Right ventricle myocardium inferior (tissue), 1 donor: ENCODE measurements at regions of chr13 and their contacts with region 1.

Region 1: DNA sequence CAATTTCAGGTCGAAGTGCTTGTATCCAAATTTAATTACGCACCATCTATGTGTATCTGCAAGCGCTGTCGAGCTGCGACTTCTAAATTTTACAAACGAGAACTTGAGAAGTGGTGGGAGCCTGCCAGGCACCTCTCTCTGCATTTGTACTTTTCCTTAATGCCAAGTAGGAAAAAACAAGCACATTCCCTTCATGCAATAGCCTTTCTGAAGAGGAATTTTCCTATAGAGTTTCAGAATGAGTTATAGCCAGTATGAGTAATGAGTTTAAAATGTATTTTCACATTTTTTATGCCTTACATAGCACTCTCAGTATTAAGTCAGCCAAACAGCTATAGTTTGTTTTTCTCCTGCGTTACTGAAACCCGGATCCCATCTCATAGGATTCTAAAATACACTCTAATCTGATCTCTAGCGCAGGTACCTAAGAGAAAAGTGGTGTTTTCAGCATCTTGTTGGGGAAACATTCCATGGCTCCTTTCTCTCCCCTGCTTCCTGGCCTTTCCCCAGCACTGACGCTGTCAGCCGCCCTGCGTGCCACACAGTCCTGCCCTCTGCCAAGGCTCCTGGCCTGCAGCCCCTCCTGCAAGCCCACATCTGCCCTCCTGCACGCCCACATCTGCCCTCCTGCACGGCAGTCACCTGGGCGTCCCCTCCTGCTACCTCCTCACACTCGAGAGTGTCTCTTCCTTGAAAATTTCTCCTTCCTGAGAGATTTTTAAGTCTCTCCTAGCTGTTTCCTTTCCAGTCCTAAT is 526.9 kb downstream of the MYO16 start:
- DNase-seq: no peak
- ATAC-seq: peak; percentile 67

Region 2: DNA sequence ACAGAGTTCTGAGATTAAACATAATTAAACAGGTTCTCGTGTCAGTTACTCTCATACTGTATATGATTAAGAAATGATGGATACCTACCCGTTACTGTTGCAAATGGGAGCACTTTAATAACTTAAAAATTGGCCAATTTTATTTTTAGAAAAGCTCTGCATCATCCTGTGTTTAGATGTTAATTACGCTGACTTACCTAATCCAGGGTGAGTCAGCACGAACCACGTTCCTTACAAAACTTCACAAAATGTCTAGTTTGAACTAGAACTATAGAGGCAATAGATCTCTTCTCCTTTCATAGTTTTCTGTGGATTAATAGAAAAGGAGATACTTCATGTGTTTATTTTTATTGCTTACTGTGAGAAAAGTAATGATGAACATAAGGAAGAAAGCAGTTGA is 163.0 kb before region 1 on chr13:
- intact Hi-C with region 1: no loop called
- DNase-seq: no peak
- ATAC-seq: no peak

Region 3: DNA sequence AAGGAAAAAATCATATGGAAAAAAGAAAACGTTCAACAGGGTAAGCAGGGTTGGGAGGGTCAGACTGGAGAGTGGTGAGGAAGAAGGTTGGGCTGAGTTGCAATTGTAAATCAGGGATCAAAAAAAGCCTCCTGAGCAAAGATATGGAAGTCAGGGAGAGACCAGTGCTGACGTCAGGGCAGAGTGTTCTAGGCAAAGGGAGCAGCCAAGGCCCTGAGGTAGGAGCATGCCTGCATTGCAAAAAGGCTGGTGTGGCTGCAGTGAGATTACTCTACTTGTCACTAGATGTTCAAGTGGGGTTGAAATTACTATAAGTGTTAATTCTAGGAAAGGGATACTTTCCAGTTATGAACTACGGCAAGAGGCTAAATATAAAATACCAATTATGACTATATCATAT is 35.1 kb after region 1 on chr13:
- intact Hi-C with region 1: loop called (anchors 5 kb)
- DNase-seq: no peak
- ATAC-seq: peak; percentile 94

Region 4: DNA sequence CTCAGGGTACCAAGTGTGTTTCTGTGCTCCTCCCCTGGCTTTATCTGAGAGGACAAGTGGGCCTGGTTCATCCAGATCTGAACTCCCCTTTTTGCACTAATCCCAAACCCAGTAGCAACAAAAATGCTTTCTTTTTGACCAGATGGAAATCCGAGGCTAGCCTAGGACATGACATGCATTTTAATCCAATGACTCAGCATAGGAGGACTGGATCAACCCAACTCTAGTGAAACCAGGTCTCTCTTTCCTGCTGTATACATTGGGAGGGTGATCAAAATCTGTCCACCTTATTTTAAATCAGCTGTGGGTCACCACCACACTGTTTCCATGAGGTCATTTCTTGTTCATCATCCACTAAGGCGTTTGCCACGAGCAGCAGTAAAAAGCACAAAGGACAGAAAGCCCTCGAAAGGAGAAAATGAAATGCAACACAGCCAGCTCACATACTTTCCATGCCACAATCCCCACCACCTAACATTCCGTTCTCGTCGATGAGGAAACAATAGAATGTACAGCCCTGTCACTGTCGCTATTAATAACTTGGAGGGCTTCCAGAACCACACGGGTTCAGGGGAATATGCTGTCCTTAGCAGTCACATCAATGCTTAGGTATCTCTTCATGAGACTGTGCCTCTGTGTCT is 87.1 kb after region 1 on chr13:
- intact Hi-C with region 1: loop called (anchors 5 kb)
- DNase-seq: no peak
- ATAC-seq: peak; percentile 92

Region 5: GRCh38 chr13:109383670-109384069 is 227.3 kb after region 1 on chr13:
- intact Hi-C with region 1: no loop called
- DNase-seq: no peak
- ATAC-seq: no peak

Region 6: DNA sequence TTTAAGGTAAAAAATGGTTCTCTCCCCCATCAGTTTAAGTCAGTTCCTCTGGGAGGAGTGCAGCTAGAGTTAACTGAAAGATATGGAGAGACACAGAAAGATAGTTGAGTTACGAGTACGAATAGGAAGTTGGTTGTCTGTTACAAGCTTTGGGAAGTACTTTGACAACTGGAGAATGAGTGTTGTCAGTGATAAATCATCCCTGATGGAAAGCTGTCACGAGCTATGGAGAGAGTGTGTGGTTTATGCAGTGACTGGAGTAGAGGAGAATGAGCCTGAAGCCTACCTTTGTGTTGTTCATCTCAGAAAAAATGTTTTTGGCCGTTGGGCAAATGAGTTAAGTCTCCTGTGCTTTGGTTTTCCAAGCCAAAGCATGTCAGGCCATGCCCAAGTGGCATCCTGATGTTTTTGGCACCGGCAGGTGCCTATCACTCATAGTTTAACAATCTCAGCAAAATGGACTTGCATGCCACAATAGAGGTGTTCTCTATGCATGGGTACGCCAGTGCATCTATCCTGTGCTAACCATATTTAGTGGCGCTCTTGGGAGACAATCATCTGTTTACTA is 279.8 kb after region 1 on chr13:
- intact Hi-C with region 1: no loop called
- DNase-seq: no peak
- ATAC-seq: no peak